B cell (primary cell): ENCODE measurements at regions of chr5 and their contacts with region 1.

Region 1: GRCh38 chr5:138024117-138024516 is 8.8 kb downstream of the FAM13B start:
- DNase-seq: no peak
- ATAC-seq: no peak
- H3K4me3 ChIP-seq: no peak overlapping the region
- H3K4me3 Mint-ChIP-seq: no peak overlapping the region
- H3K27ac ChIP-seq: no peak overlapping the region
- H3K27ac Mint-ChIP-seq: no peak overlapping the region
- H3K4me1 ChIP-seq: peaks cover 46 to 62% of the 10 kb centered on the region in 2 donors
- H3K4me1 Mint-ChIP-seq: peaks cover 74% of the 10 kb centered on the region
- H3K27me3 ChIP-seq: no peaks in the 10 kb centered on the region
- H3K27me3 Mint-ChIP-seq: no peaks in the 10 kb centered on the region
- CTCF ChIP-seq: no peak

Region 2: GRCh38 chr5:137989419-137989818 is 34.7 kb before region 1 on chr5:
- CTCF ChIA-PET with region 1: no interaction called
- POLR2A ChIA-PET with region 1: no interaction called
- intact Hi-C with region 1: loop called (anchors 5 kb)
- DNase-seq: no peak
- ATAC-seq: no peak
- H3K4me3 ChIP-seq: no peak overlapping the region
- H3K4me3 Mint-ChIP-seq: no peak overlapping the region
- H3K27ac ChIP-seq: no peak overlapping the region
- H3K27ac Mint-ChIP-seq: no peak overlapping the region
- H3K4me1 ChIP-seq: no peaks in the 10 kb centered on the region
- H3K4me1 Mint-ChIP-seq: peaks cover 12% of the 10 kb centered on the region
- H3K27me3 ChIP-seq: no peaks in the 10 kb centered on the region
- H3K27me3 Mint-ChIP-seq: no peaks in the 10 kb centered on the region
- CTCF ChIP-seq: no peak